Endothelial cell of umbilical vein (primary cell): ENCODE measurements at regions of chr7 and their contacts with region 1.

Region 1: DNA sequence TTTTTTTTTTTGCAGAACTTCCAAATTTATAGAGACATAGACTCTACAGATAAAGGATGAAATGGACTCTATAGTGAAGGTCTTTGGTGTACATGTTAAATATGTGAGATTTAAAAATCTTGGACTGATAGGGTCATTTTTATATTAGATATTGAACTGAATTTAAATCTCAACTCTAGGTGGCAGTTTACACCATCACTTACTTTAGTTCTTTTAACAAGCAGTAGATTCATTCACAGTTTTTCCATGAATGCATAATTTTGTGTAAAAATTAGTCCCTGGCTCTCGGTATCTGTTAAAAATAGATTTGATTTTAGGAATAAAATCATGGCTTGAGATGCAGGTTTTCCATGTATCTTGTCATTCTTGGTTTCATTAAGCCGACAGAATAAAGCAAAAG is 31.1 kb upstream of the SNX13 start:
- DNase-seq: peak; percentile 46
- H3K4me3 ChIP-seq: no peak overlapping the region
- H3K27ac ChIP-seq: no peak overlapping the region
- H3K4me1 ChIP-seq: no peaks in the 10 kb centered on the region
- H3K27me3 ChIP-seq: no peaks in the 10 kb centered on the region
- CTCF ChIP-seq: no peak
- POLR2A ChIP-seq: no peak

Region 2: GRCh38 chr7:18119985-18120384 is 148.6 kb after region 1 on chr7:
- CTCF ChIA-PET with region 1: no interaction called
- POLR2A ChIA-PET with region 1: no interaction called
- dilution Hi-C with region 1: no loop called
- intact Hi-C with region 1: loop called (anchors 1 kb)
- DNase-seq: peak; percentile 21
- H3K4me3 ChIP-seq: no peak overlapping the region
- H3K27ac ChIP-seq: no peak overlapping the region
- H3K4me1 ChIP-seq: no peaks in the 10 kb centered on the region
- H3K27me3 ChIP-seq: no peaks in the 10 kb centered on the region
- CTCF ChIP-seq: peak; percentile 33 to 54
- POLR2A ChIP-seq: no peak

Region 3: GRCh38 chr7:18320971-18321567 is 349.7 kb after region 1 on chr7:
- CTCF ChIA-PET with region 1: interaction called, 6 read pairs
- POLR2A ChIA-PET with region 1: no interaction called
- dilution Hi-C with region 1: no loop called
- intact Hi-C with region 1: loop called (anchors 1 kb)
- DNase-seq: peak; percentile 65
- H3K4me3 ChIP-seq: no peak overlapping the region
- H3K27ac ChIP-seq: no peak overlapping the region
- H3K4me1 ChIP-seq: no peaks in the 10 kb centered on the region
- H3K27me3 ChIP-seq: no peaks in the 10 kb centered on the region
- CTCF ChIP-seq: peak; percentile 27 to 49
- POLR2A ChIP-seq: no peak

Region 4: DNA sequence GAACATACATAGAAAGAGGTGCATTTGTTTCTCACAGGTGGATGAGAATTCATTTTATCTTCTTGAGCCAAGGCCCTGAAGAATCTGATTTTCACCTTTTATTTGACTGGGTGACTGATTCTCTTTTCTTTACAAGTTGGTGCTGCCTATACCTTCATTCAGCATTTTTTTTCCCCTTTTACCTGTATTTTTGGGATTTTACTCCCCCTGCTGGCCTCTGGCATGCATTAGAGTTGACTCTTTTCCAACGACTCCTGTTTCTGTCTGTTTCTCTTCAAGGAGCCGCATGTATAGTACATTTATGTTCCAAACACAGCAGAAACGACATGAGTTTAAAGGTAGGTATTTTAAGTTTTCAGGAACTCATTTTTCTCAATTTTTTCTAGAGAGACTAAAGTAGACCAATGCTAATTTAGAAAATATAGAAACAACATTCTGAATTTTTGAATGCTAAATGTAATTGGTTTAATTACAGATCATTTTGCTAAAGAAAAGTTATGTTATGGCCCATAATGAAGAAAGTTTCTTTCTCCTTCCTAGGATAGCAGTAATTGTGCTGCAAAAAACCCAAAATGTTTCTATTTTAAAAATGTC is 374.3 kb after region 1 on chr7:
- CTCF ChIA-PET with region 1: interaction called, 5 read pairs
- POLR2A ChIA-PET with region 1: no interaction called
- dilution Hi-C with region 1: no loop called
- intact Hi-C with region 1: loop called (anchors 1 kb)
- DNase-seq: peak; percentile 72
- H3K4me3 ChIP-seq: no peak overlapping the region
- H3K27ac ChIP-seq: no peak overlapping the region
- H3K4me1 ChIP-seq: no peaks in the 10 kb centered on the region
- H3K27me3 ChIP-seq: no peaks in the 10 kb centered on the region
- CTCF ChIP-seq: peak; percentile 70 to 74
- POLR2A ChIP-seq: no peak